SK-N-SH (cell line): ENCODE measurements at regions of chr10 and their contacts with region 1.

Region 1: DNA sequence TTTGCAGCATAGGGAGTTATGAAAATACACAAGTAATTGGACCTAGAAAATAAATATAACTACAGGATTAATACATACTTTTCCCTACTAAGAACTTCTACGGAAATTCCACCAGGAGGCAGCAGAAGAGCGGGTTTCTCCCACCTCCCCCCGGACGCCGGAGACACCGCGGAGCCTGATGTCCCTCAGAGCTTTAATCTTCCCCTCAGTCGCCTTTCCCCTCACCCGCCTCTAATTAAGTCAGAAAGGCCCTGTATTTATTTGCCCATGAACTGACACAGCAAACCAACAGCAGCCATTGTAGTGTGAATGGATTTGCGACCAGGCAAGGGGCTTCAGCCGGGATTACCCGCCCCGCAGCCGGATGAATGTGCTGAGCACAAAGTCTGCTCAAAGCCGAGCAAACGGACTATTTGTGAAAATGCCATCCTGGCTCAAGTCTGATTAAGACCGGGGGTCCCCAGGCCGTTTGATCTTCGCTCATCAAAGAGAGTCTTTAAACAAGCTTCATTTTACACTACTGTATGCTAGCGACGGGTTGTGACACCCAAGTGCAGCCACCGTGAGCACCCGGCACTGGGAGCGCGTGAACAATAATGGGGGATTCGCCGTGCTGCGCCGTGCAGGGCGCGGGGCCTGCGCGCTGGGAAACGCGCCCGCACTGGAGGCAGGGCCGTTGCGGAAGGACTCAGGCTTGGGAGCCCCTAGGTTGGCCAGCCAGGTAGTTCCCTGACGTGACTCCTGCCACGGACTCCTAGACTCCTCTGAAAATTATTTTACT is 5.6 kb upstream of the DKK1 start:
- DNase-seq: peak; percentile 88
- H3K4me3 ChIP-seq: no peak overlapping the region; a peak in 2 of 4 replicates
- H3K27ac ChIP-seq: peak overlapping the region in 1 of 2 experiments; percentile 67; a peak in 1 of 4 replicates
- H3K4me1 ChIP-seq: peaks cover 0 to 8% of the 10 kb centered on the region in 2 experiments; a peak in 2 of 4 replicates
- H3K27me3 ChIP-seq: no peaks in the 10 kb centered on the region
- CTCF ChIP-seq: peak; percentile 80
- EP300 ChIP-seq: no peak
- RAD21 ChIP-seq: peak; percentile 97

Region 2: GRCh38 chr10:52215745-52216361 is 92.6 kb before region 1 on chr10:
- CTCF ChIA-PET with region 1: interaction called, 10 read pairs
- POLR2A ChIA-PET with region 1: no interaction called
- DNase-seq: peak; percentile 32
- H3K4me3 ChIP-seq: peak overlapping the region in 1 of 2 experiments; percentile 10; a peak in 1 of 4 replicates
- H3K27ac ChIP-seq: peak overlapping the region in 1 of 2 experiments; percentile 69; a peak in 3 of 4 replicates
- H3K4me1 ChIP-seq: peaks cover 6 to 8% of the 10 kb centered on the region in 2 experiments
- H3K27me3 ChIP-seq: no peaks in the 10 kb centered on the region
- CTCF ChIP-seq: peak; percentile 83
- EP300 ChIP-seq: no peak
- RAD21 ChIP-seq: peak; percentile 93

Region 3: DNA sequence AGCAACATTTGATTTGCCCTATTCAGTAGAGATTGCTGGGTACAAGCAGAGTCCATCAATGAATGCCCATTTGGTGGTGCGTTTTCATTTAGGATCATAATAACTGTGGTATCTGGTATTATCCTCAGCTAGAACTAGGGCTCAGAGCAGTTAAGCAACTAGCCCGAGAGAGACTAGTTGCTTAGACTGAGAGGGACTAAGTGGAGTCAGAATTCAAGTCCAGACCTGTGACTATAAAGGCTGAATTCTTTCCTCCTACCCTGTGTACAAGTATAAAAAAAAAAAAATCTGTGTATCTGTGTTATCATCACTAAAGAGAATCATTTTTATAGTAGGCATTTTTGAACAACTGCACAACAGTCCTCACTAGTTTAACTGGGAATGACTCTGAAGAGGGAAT is 39.7 kb before region 1 on chr10:
- CTCF ChIA-PET with region 1: no interaction called
- POLR2A ChIA-PET with region 1: no interaction called
- DNase-seq: no peak
- H3K4me3 ChIP-seq: no peak overlapping the region
- H3K27ac ChIP-seq: no peak overlapping the region
- H3K4me1 ChIP-seq: no peaks in the 10 kb centered on the region
- H3K27me3 ChIP-seq: no peaks in the 10 kb centered on the region
- CTCF ChIP-seq: no peak
- EP300 ChIP-seq: no peak
- RAD21 ChIP-seq: no peak

Region 4: DNA sequence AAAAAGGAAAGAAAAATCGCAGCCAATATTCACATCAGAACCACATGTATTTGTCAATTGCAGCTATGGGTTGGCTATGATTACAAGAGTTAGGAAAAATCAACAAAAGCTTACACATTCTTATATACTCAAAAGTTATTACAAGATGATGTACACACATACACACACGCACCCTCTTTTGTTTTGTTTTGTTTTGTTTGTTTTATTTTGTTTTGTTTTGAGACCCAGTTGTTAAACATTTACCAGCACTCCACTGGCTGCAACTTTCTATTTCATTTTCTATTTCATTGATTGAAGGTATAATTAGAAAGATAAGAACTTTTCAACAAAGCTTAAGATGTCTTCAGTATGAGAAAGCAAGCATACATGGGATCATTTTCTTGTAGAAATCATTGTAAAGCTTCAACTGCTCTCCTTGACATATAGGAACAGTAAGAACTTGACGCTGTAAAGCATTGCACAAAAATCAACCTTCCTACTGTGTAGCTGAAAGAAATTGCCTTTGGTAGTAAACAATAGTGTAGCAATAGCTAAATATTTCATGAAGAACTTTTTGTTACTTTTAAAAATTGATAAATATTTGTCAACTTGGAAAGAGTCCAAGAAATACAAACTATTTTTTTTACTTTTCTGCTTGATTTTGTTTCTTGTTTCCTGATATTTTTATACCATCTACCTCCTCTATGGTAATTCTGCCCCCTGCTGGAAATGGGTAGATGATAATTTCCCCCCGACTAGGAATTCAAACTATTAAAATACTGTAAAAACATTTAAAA is 258.2 kb after region 1 on chr10:
- CTCF ChIA-PET with region 1: interaction called, 15 read pairs
- POLR2A ChIA-PET with region 1: no interaction called
- DNase-seq: peak; percentile 2
- H3K4me3 ChIP-seq: no peak overlapping the region; a peak in 1 of 4 replicates
- H3K27ac ChIP-seq: peak overlapping the region in 1 of 2 experiments; percentile 1; a peak in 1 of 4 replicates
- H3K4me1 ChIP-seq: peaks cover 0 to 10% of the 10 kb centered on the region in 2 experiments; a peak in 1 of 4 replicates
- H3K27me3 ChIP-seq: no peaks in the 10 kb centered on the region
- CTCF ChIP-seq: peak; percentile 69
- EP300 ChIP-seq: no peak
- RAD21 ChIP-seq: peak; percentile 63

Region 5: DNA sequence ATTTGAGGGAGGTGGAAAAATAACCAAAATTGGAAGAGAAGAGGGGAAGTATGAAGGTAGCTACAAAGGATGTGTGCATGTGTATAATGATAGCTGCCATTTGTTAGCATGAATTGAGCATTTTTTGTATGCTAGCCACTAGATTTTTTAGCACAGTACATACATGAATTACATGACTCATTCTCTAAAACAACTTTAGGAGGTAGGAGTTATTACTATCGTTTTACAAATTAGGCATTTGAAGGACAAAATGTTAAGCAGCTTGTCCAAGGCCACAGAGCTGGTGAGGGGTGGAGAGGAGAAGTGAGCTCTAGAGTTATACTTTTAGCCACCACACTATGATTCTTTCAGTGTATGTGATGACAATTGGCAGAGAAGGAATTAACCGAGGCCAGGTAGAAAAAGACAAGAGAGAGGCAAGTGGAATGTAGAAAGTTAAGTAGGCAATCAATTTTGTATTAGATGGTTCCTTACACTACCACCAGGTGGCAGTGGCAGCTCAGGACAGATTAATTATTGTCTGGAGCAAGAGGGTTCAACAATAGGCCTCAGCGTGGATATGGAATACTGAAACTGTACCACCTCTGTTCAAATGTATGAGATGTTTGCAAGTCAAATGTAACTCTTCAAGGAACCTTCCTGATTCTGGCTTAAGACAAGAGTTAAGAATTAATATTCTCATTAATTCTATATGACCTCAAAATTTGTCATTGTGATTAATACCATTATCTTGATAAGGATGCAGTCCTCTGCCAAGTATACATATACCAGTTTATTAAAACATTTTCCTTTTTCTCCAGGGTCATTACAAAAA is 336.1 kb after region 1 on chr10:
- CTCF ChIA-PET with region 1: interaction called, 60 read pairs
- POLR2A ChIA-PET with region 1: no interaction called
- DNase-seq: peak; percentile 25
- H3K4me3 ChIP-seq: no peak overlapping the region; a peak in 1 of 4 replicates
- H3K27ac ChIP-seq: peak overlapping the region in 1 of 2 experiments; percentile 60; a peak in 2 of 4 replicates
- H3K4me1 ChIP-seq: peaks cover 0 to 2% of the 10 kb centered on the region in 2 experiments; a peak in 2 of 4 replicates
- H3K27me3 ChIP-seq: no peaks in the 10 kb centered on the region
- CTCF ChIP-seq: peak; percentile 90
- EP300 ChIP-seq: no peak
- RAD21 ChIP-seq: peak; percentile 93

Region 6: GRCh38 chr10:52779541-52780390 is 471.3 kb after region 1 on chr10:
- CTCF ChIA-PET with region 1: interaction called, 59 read pairs
- POLR2A ChIA-PET with region 1: no interaction called
- DNase-seq: peak; percentile 81
- H3K4me3 ChIP-seq: peak overlapping the region in 1 of 2 experiments; percentile 57; a peak in 1 of 4 replicates
- H3K27ac ChIP-seq: no peak overlapping the region; a peak in 1 of 4 replicates
- H3K4me1 ChIP-seq: peaks cover 0 to 2% of the 10 kb centered on the region in 2 experiments; a peak in 1 of 4 replicates
- H3K27me3 ChIP-seq: no peaks in the 10 kb centered on the region
- CTCF ChIP-seq: peak; percentile 93
- EP300 ChIP-seq: no peak
- RAD21 ChIP-seq: peak; percentile 96